ENCODE measurements at regions of chr17 and their contacts with region 1.

Region 1: DNA sequence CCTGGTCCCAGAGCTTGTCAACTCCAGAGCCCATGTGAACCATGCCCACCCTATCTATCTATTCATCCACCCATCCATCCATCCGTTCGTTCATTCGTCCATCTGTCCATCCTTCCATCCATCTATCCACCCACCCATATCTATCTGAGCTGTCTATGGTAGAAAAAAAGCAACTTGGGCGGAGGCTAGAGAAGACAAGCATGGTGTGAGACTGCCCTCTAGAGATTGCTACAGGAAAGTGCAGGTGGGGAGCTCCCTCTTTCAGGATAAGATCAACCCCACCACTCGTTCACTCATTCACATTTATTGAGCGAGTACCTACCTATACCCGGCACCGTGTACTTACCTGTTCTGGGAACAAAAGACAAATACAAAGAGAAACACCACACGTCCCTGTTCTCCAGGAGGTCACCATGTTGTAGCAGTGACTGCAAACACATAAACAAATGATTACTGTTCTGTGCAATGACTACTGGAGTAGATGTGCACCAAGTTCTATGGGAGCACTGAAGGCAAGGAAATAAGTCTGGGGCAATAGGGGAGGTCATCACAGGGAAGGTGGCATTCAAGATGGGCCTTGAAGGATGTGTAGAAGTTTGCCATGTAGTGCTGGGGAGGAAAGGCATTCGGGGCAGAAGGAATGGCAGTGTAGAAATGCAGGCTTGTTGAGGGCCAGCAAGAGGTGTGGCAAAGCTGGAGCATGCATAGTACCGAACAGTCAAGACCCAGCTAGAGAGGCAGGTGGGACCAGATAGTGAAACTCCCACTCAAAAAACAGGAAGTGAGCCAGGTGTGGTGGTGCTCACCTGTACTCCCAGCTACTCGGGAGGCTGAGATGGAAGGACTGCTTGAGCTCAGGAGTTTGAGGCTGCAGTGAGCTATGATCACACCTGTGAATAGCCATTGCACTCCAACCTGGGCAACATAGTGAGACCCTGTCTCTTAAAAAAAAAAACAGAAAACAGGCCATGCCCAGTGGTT is 13.4 kb upstream of the ATP5MC1 start:
- DNase-seq: peak; percentile 85

Region 2: DNA sequence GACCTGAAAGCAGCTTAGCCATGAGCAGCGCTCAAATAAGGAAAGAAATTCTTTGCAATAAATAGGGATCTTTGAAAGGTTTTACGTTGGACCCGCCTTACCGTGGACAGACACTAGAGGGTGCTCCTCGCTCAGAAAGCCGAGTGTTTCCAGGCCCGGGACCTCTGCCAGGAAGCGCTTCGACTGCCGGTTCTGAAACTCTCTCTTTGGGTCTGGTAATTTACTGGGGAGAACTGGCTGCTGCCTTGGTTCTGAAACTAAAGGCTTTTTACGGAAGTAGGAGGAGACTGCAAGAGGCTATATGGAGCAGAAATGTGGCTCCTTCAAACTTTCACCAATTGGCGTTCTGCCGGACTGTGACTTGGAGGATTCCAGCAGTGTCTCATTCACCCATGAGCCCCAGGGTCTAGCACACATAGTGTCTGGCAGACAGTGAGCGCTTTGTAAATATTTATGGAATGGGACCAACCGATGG is 207.5 kb before region 1 on chr17:
- CTCF ChIA-PET with region 1: interaction called, 39 read pairs
- POLR2A ChIA-PET with region 1: no interaction called
- DNase-seq: peak; percentile 78

Region 3: DNA sequence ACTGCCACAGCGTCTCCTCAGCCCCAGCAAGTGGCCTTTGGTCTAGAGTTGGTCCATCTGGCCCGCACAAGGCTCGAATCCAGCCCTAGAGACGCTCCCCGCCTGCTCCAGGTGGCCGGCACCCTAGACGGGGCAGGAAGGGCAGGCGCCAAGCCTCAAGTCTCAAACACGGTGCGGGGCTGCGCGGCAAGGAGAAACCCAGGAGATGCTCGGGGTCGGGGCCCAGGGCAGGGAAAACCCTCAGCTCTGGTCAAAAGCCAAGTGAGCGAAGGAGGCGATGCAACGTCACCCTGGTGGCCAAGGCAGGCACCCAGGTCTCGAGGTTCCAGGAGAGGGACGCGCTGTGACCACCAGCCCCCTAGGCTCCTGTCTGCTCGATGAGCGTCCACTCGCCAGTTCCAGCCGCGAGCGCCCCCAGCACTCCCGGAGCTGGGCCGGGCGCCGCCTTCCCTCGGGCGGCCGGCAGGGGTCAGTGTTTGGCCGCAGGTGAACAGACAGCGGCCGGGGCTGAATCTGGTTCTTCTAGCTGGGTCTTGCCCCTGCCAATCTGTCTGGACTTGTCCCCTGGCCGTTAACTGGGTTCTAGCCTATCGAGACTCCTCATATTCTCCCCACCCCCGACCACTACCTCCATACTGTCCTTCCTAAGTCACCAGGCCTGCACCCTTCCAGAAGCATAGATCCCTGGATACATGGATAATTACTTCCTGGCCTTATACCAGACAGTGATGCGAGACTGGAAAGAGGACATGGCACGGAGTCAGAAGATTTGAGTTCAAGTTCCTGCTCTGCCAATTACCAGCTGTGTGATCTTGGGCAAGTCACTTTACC is 200.9 kb before region 1 on chr17:
- CTCF ChIA-PET with region 1: interaction called, 39 read pairs
- POLR2A ChIA-PET with region 1: no interaction called
- DNase-seq: peak; percentile 89

Region 4: GRCh38 chr17:48724251-48725003 is 154.8 kb before region 1 on chr17:
- CTCF ChIA-PET with region 1: interaction called, 10 read pairs
- POLR2A ChIA-PET with region 1: interaction called, 8 read pairs
- DNase-seq: peak; percentile 54

Region 5: DNA sequence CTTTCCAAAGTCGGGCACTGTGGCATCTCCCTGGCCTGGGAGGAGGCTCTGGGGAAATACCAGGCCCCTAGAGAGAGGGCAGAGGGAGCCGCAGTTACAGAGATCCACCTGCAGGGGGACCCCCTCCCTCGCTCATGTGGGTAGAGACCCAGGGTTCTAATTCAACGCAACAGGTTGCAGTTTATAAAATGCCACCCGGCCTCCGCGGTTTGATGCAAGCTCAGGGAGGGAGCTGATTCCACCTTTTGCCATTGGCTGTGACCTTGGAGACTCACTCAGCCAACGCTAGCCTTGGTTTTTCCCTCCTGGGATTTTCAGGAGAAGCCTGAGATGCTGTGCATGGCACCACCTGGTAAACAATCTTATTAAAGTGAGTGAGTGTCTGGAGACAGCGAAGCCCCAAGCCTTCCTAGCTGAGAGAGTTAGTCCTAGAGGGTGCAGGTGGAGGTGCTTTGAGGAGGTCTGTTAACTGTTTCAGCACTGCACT is 74.2 kb before region 1 on chr17:
- CTCF ChIA-PET with region 1: interaction called, 150 read pairs
- POLR2A ChIA-PET with region 1: interaction called, 7 read pairs
- DNase-seq: peak; percentile 89

Region 6: DNA sequence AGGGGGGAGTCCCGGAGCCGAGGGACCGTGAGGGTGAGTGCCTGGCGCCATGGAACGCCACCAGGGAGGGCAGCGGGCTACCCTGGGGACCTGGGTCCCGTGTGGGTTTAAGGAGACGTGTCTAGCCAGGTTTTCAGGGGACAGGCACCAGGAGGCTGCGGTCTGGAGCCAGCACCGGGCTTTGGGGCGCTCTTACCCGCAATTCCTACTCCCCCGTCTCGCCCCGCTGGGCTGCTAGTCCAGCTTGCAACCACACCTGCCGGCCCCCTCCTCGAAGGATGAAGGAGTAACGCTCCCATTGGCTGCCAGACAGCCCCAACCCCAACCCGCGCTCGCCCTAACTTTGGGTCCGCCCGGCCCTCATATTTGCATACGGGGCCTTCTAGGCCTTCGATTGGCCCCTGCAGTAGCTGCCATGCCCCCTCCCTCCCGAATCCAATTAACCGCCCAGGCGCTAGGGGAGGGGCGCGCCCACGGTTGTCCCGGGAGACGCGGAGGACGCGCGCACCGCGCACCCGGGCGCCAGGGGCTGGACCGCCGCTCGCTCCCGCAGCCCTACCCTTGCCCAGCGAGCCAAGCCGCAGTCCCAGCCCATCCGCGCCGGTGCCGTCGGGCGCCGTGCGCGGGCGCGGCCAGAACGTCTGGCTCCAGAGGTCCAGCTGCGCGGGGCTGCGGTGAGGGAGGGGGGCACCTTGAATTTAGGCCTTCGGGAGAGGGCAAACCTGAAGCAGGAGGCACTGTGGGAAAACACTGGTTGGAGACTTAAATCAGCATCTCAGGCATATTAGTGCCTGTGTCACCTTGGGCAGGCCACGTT is 62.2 kb before region 1 on chr17 and contains the start of gene TTLL6:
- CTCF ChIA-PET with region 1: interaction called, 150 read pairs
- POLR2A ChIA-PET with region 1: interaction called, 4 read pairs
- DNase-seq: peak; percentile 90

Region 7: DNA sequence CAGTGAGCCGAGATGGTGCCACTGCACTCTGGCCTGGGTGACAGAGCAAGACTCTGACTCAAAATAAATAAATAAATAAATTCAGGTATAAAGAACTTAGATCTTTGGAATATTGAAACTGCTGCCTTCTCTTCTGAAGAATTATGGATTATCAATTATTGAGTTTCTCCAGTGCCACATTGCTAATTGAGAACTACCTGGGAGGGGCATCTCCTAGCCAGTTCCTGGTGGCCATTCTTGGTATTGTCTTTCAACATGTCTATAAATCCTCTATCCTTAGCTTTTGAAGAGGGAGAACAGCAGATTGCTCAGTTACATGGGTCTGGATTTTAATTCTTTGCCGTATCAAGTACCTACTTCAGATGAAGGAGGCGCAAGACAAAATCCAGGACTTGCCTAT is 19.2 kb before region 1 on chr17:
- CTCF ChIA-PET with region 1: interaction called, 19 read pairs
- POLR2A ChIA-PET with region 1: no interaction called
- DNase-seq: no peak

Region 8: DNA sequence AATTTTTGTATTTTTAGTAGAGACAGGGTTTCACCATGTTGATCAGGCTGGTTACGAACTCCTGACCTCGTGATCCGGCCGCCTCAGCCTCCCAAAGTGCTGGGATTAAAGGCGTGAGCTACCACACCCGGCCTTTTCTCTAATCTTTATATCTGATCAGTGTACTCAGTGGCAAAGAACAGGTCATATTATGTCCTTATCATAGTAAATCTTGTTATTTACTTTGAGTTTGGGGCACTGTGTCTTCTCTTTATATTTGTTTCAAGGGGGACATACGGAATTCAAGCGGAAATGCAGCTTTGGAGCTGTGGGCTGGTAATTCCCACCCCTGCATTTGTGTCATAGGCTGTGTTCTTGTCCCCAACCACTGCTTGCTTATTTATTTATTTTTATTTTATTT is 159.8 kb after region 1 on chr17:
- CTCF ChIA-PET with region 1: no interaction called
- POLR2A ChIA-PET with region 1: no interaction called
- DNase-seq: no peak

Region 9: DNA sequence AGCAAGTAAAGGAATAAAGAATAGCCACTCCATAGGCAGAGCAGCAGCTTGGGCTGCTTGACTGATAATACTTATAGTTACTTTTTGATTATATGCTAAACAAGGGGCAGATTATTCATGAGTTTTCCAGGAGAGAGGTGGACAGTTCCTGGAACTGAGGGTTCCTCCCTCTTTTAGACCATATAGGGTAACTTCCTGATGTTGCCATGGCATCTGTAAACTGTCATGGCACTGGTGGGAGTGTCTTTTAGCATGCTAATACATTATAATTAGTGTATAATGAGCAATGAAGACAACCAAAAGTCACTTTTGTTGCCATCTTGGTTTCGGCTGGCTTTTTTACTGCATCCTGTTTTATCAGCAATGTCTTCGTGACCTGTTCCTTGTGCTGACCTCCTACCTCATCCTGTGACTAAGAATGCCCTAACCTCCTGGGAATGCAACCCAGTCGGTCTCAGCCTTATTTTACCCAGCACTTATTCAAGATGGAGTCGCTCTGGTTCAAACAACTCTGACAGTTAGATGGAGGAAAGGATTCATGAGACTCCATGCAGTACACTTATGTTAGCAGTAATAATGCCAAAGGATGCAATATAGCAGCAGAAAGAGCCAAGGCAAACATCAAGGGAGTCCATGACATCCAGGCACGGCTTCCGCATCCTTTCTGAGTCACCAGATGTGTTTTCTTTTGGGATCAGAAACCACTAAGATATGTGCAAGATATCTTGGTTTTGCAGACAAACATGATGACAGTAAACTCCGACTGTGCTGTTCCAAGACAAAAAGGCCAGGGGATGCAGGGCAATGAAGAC is 197.6 kb after region 1 on chr17:
- CTCF ChIA-PET with region 1: no interaction called
- POLR2A ChIA-PET with region 1: no interaction called
- DNase-seq: no peak

Region 10: GRCh38 chr17:49132699-49133364 is 253.6 kb after region 1 on chr17 and contains the start of gene B4GALNT2:
- CTCF ChIA-PET with region 1: no interaction called
- POLR2A ChIA-PET with region 1: no interaction called
- DNase-seq: no peak

Region 11: DNA sequence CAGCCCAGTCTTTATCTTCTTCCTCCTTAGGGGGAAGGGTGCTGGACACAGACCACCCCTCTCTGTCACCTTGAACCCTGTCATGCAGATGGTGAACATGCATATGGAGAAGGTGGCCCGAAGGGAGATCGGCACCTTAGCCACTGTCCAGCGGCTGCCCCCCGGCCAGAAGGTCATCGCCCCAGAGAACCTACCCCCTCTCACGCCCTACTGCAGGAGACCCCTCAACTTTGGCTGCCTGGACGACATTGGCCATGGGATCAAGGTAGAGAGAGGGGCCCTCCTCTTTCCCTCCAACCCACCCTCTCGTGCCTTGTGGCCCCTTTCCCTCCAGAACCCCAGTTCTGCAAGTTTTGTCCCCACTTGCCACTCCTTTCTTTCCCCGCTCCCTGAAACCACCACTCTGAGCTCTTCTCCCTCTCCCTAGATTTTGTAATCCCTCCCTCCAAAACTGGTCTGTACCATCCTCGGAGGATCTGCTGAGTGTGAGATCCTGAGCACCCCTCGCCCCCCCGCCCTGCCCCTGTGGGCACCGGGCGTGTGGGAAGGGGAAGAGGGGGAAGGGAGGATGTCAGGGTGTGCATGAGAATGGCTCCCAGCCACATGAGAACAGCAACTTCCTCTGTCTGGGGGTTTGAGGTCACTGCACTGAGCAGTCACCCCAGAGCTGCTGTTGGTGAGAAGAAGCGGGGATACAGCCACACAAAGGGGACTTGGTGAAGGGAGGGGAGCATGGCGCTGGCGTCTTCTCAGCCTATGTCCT is 338.6 kb after region 1 on chr17:
- CTCF ChIA-PET with region 1: no interaction called
- POLR2A ChIA-PET with region 1: no interaction called
- DNase-seq: no peak

Measured in HEK293T (cell line).